HEK293 (cell line): ENCODE measurements at regions of chr11 and their contacts with region 1.

Region 1: DNA sequence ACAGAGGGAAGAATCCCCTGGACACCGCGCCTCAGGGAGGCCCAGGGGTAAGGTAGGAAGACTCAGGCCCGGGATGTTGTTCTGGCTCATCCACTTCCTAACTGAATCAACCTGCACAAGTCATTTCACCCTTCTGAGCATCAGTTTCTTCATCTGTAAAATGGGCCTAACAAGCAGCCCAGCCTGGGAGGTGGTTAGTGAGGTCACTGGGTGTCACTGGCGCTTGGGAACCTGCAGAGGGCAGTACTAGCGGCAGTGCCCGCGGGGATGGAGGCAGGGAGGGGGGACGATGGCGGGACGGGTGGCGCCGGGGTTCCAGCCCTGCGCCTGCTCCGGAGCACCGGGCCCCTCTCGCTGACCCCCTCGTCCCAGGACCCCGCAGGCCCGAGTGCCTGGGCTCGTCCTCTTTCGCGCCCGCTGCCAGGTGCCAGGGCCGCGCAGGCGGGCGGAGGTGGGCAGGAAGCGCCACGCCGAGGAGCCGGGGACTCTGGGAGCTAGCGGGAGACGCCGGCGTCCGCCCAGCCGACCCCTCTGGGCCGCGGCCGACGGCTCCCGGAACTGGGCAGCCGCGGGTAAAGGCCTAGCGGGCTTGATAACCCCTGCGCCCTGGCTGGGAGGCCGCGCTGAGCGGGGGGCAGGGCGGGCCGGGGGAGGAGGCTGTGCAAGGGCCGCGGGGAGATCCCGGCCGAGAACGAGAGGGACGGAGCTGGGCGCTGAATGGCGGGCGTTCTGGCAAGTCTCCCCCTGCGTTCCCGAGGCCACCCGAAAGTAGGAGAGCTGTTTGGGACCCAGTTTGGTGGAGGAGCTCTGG is at the start of gene NLRX1:
- H3K4me3 ChIP-seq: peak within 1 kb of the TSS; percentile 83
- H3K27ac ChIP-seq: peak within 1 kb of the TSS; percentile 82
- H3K4me1 ChIP-seq: no peaks in the 10 kb centered on the region
- CTCF ChIP-seq: peak; percentile 75; the same call in 1 of the 2 replicates

Region 2: DNA sequence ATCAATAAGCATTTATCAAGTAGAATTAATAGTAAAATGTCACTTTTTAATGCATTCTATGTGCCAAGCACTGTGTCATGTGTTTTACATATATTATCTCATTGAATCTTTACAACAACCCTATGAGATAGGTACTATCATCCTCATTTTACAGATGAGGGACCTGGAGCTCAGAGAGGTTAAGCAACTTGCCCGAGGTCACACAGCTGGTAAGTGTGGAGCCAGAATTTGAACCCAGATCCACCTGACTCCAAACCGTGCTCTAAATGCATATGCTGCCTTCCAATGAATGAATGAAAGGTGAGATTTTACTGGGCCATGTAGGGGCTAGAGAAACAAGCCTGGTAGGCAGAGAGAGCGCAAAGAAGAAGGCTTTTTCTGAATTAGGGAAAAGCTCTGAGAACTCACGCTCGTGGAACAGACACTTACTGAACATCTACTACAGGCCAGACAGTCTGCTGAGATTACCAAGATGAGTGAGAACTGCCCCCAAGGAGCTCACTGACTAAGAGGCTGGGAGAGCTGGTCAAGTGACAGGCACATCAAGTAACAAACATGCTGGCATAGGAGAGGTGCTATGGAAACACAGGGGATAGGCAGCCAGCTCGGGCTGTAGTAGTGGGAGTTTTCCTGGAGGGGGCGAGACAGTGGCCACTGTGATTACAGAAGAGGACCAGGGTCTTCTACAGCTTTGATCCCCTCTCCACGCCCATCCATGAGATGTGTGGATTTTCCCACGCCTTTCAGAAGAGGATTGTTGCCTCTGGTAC is 15.4 kb before region 1 on chr11:
- CTCF ChIA-PET with region 1: interaction called, 10 read pairs
- POLR2A ChIA-PET with region 1: interaction called, 6 read pairs
- H3K4me3 ChIP-seq: no peak overlapping the region
- H3K27ac ChIP-seq: no peak overlapping the region
- H3K4me1 ChIP-seq: no peaks in the 10 kb centered on the region
- CTCF ChIP-seq: no peak

Region 3: DNA sequence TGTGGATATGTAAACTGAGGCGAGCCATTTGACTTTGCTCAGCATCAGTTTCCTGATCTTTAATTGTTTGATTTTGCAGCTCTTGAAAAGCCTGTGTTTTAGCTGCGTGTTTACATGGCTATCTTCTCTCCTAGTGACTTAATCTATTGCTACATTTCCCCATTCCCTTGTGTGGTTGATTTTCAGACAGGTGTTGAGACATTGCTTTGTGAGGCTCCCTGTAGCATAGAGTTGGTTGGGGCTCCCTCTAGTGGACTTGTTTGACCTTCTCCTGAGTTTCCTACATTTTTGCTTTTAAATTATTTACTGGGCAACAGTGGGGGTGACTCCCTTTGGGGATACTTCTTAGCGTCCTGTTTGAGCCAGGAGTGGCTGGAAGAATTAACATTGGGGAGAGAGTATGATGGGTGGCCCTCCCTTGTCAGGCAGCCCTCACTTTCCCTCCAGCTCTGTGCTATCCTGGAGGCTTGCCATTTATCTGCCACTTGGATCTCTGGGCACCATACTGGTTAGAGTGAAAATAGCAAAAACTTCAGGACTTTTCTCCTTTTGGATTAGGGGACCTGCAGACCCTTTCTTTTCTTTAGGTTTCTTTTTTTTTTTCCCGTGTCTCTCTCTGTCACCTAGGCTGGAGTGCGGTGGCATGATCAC is 28.3 kb after region 1 on chr11:
- CTCF ChIA-PET with region 1: interaction called, 11 read pairs
- POLR2A ChIA-PET with region 1: no interaction called
- H3K4me3 ChIP-seq: no peak overlapping the region
- H3K27ac ChIP-seq: no peak overlapping the region
- H3K4me1 ChIP-seq: no peaks in the 10 kb centered on the region
- CTCF ChIP-seq: peak; percentile 60; the same call in 1 of the 2 replicates

Region 4: GRCh38 chr11:119236490-119236889 is 67.8 kb after region 1 on chr11:
- CTCF ChIA-PET with region 1: no interaction called
- POLR2A ChIA-PET with region 1: no interaction called
- H3K4me3 ChIP-seq: no peak overlapping the region
- H3K27ac ChIP-seq: no peak overlapping the region
- H3K4me1 ChIP-seq: no peaks in the 10 kb centered on the region
- CTCF ChIP-seq: no peak

Region 5: GRCh38 chr11:119403021-119403420 is 234.3 kb after region 1 on chr11:
- CTCF ChIA-PET with region 1: no interaction called
- POLR2A ChIA-PET with region 1: no interaction called
- H3K4me3 ChIP-seq: no peak overlapping the region
- H3K27ac ChIP-seq: no peak overlapping the region
- H3K4me1 ChIP-seq: no peaks in the 10 kb centered on the region
- CTCF ChIP-seq: no peak